CD14-positive monocyte (primary cell): ENCODE measurements at regions of chr14 and their contacts with region 1.

Region 1: DNA sequence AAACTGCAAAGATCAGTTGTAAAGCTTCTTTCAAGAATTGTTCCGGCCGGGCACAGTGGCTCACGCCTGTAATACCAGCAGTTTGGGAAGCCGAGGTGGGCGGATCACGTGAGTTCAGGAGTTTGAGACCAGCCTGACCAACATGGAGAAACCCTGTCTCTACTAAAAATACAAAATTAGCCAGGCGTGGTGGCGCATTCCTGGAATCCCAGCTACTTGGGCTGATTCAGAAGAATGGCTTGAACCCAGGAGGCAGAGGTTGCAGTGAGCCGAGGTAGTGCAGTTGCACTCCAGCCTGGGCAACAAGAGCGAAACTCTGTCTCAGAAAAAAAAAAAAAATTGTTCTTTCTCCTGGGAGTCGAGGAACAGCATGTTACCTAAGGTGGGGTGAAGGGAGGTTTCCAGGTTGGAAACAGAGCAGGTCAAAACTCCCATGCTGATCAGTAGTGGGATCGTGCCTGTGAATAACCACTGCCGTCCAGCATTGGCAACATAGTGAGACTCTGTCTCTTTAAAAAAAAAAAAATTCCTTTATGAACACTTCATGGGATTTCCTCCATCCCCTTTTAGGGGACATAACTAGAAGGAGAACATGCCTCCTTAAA is 13.9 kb downstream of the FBXO34 start:
- DNase-seq: no peak
- H3K4me3 ChIP-seq: no peak overlapping the region
- H3K4me3 Mint-ChIP-seq: peak overlapping the region in 1 of 2 donors; percentile 31
- H3K27ac ChIP-seq: no peak overlapping the region
- H3K27ac Mint-ChIP-seq: peak overlapping the region in 2 of 7 donors; percentile 24 to 40
- H3K4me1 ChIP-seq: no peaks in the 10 kb centered on the region
- H3K4me1 Mint-ChIP-seq: no peaks in the 10 kb centered on the region
- H3K27me3 ChIP-seq: no peaks in the 10 kb centered on the region
- H3K27me3 Mint-ChIP-seq: no peaks in the 10 kb centered on the region
- CTCF ChIP-seq: no peak

Region 2: DNA sequence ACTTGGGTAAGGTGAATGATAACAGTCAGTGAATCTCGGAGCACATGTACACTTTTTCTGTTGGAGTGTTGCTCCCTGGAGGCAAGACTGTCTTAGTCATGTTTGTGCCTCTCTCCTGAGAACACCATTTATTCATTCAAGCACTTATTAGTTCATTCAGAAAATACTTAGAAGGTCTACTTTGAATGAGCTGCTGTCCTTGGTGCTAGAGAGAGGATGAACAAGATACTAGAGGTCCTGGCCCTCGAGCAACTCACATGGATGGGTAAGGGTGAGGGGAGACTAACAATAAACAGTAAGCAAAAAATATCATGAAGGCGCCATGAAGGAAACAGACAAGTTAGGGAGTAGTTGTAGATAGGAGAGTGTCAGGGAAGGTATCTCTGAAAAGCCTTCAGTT is 735.3 kb before region 1 on chr14:
- intact Hi-C with region 1: no loop called
- DNase-seq: no peak
- H3K4me3 ChIP-seq: no peak overlapping the region
- H3K4me3 Mint-ChIP-seq: no peak overlapping the region
- H3K27ac ChIP-seq: no peak overlapping the region
- H3K27ac Mint-ChIP-seq: no peak overlapping the region
- H3K4me1 ChIP-seq: no peaks in the 10 kb centered on the region
- H3K4me1 Mint-ChIP-seq: no peaks in the 10 kb centered on the region
- H3K27me3 ChIP-seq: no peaks in the 10 kb centered on the region
- H3K27me3 Mint-ChIP-seq: peaks cover 1 to 6% (median 3%) of the 10 kb centered on the region in 3 donors
- CTCF ChIP-seq: no peak

Region 3: GRCh38 chr14:55201224-55202050 is 83.7 kb before region 1 on chr14:
- intact Hi-C with region 1: no loop called
- DNase-seq: no peak
- H3K4me3 ChIP-seq: no peak overlapping the region
- H3K4me3 Mint-ChIP-seq: no peak overlapping the region
- H3K27ac ChIP-seq: no peak overlapping the region
- H3K27ac Mint-ChIP-seq: no peak overlapping the region
- H3K4me1 ChIP-seq: no peaks in the 10 kb centered on the region
- H3K4me1 Mint-ChIP-seq: no peaks in the 10 kb centered on the region
- H3K27me3 ChIP-seq: no peaks in the 10 kb centered on the region
- H3K27me3 Mint-ChIP-seq: peaks cover 2 to 5% (median 4%) of the 10 kb centered on the region in 3 donors
- CTCF ChIP-seq: no peak

Region 4: GRCh38 chr14:55333711-55334485 is 48.7 kb after region 1 on chr14:
- intact Hi-C with region 1: loop called in 1 of 2 experiments (anchors 10 kb)
- DNase-seq: no peak
- H3K4me3 ChIP-seq: no peak overlapping the region
- H3K4me3 Mint-ChIP-seq: no peak overlapping the region
- H3K27ac ChIP-seq: no peak overlapping the region
- H3K27ac Mint-ChIP-seq: peak overlapping the region in 4 of 7 donors; percentile 17 to 54 (median 32)
- H3K4me1 ChIP-seq: no peaks in the 10 kb centered on the region
- H3K4me1 Mint-ChIP-seq: peaks cover 16% of the 10 kb centered on the region
- H3K27me3 ChIP-seq: no peaks in the 10 kb centered on the region
- H3K27me3 Mint-ChIP-seq: no peaks in the 10 kb centered on the region
- CTCF ChIP-seq: no peak